ENCODE measurements at regions of chr6 and their contacts with region 1.

Region 1: DNA sequence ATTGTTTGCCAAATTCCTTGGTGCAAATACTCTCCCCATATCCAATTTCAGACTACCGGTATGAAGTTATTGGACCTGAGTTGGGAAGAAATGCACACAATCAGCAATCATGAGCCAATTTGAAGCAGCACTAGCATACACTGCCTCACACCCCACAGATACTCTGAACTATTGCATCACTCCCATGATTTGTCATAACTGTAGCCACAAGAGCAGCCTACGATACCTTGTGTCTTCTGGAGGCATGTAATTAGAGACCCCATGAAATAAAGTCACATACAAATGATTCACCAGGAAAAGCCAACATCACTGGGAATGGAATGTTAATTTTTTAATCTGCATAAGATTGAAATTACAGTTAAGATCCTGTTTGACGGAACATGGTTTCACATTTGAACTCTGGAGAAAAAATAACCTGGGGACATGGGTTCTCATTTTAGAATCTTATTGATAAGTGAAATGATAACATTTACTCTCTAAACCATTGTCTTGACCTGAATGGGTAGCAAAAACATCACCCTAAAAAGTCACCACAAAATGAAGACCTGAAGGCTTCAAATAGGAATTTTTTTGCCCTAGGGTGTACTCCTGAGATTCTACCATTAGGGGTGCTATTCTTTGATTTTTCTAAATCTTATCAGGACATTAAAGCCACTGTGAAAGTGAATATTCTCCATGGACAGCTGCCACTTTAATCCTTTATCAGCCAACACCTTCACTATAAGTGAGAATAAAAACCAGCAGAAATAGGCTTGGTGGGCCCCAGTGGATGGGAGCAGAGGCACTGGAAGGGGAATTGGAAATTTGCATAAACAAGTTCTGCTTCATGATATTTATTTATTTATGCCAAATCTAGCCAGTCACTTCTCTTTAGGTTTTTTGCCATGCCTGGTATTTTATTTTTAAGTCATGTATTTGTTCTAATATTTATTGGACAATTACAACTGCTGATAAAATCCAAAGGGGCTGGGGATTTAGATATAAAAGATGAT is 34.5 kb upstream of the HBS1L start:
- DNase-seq: peak; percentile 63
- ATAC-seq: peak; percentile 91
- H3K4me3 ChIP-seq: peak overlapping the region; percentile 22; the same call in 1 of the 2 replicates
- H3K27ac ChIP-seq: 0 out of 2 replicates have a peak overlapping the region, but pooled peaks have one; percentile 15
- H3K4me1 ChIP-seq: peaks cover 36% of the 10 kb centered on the region
- H3K27me3 ChIP-seq: no peaks in the 10 kb centered on the region; a peak in 1 of 4 replicates
- CTCF ChIP-seq: peak; percentile 26 to 58 (median 43)
- EP300 ChIP-seq: peak; percentile 73 to 93
- POLR2A ChIP-seq: no peak
- RAD21 ChIP-seq: peak; percentile 36

Region 2: DNA sequence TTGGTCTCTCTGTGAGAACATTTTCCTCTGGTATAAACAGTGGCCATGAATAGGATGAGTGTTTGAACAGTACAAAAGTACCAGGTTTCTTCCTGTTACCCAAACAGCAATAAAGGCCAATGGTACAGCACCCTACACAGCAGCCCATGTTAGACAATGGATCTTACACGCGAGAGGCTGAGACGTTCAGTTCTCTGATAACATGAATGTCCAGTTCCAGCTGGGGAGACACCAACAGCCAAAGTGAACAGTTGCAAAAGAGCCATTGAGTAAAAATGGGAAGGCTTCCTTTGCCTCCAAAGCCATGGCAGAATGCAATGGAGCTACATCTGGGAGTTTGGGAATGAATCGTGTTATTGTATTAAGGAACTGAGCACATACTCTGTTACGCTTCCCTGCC is 524.4 kb before region 1 on chr6:
- CTCF ChIA-PET with region 1: no interaction called
- POLR2A ChIA-PET with region 1: no interaction called
- RAD21 ChIA-PET with region 1: no interaction called
- SMC1A ChIA-PET with region 1: no interaction called
- in situ Hi-C with region 1: no loop called
- intact Hi-C with region 1: no loop called
- DNase-seq: no peak
- ATAC-seq: no peak
- H3K4me3 ChIP-seq: no peak overlapping the region
- H3K27ac ChIP-seq: no peak overlapping the region
- H3K4me1 ChIP-seq: no peaks in the 10 kb centered on the region
- H3K27me3 ChIP-seq: no peaks in the 10 kb centered on the region
- CTCF ChIP-seq: no peak
- EP300 ChIP-seq: no peak
- POLR2A ChIP-seq: no peak
- RAD21 ChIP-seq: no peak

Region 3: DNA sequence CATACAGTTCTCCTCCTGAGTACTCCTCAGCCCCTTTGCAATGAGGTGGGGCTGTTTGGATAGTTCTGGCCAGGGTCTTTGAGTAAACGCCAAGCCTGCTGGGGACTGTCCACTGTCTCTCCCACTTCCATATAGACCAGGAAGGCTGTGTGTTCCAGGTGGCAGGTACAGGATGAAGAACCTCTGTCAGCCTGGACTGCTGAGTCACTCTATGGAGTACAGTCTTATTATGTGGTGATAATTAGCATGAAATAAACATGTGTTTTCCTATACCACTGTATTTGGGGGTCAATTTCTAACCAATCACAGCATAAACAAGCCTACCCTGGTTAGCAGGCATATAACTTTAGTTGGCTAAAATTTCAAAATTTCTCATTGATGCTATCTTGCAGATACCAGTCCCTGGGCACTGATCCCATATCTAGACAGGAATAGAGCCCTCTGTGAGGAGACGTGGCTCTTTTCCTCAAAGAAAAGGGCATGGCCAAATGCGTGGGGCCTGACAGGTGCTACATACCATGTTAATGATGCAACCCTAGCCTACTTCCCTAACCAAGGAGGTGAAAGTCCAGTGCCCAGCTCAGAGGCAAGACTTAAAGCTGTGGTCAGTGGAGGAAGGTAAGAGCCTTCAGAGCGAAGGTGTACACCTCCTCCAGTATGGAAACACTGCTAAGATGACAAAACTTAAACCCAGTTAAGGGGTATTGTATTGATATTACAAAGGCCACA is 134.7 kb before region 1 on chr6:
- CTCF ChIA-PET with region 1: no interaction called
- POLR2A ChIA-PET with region 1: no interaction called
- RAD21 ChIA-PET with region 1: no interaction called
- SMC1A ChIA-PET with region 1: no interaction called
- in situ Hi-C with region 1: no loop called
- intact Hi-C with region 1: no loop called
- DNase-seq: no peak
- ATAC-seq: no peak; the same call in 2 of the 3 replicates
- H3K4me3 ChIP-seq: no peak overlapping the region
- H3K27ac ChIP-seq: no peak overlapping the region
- H3K4me1 ChIP-seq: no peaks in the 10 kb centered on the region
- H3K27me3 ChIP-seq: no peaks in the 10 kb centered on the region
- CTCF ChIP-seq: no peak
- EP300 ChIP-seq: no peak
- POLR2A ChIP-seq: no peak
- RAD21 ChIP-seq: no peak

Region 4: DNA sequence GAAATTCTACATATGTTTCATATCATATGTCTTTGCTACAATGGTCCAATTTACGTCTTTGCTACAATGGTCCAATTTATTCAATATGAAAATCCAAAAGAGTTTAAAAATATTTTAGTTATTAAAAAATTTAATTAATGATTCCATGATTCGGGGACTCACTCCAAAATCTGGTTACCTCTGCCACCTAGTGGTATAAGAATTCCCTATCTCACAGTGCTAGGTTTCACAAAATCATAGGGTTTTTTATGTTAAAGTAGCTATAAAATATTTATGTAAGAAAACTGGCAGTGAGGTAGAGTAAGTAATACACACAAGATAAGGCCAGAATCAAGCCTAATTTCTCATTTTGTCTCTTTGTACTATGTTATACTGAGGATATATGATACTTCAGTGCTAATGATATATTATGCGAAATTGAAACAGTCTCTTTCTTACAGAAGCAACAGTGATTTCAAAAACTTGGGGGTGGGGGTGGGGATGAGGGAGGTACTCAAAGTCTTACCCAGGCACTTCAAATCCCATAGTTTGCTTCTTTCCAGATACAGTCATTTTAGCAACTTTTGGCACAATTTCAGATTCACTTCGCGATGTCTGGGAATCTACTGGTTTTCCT is 86.8 kb before region 1 on chr6:
- CTCF ChIA-PET with region 1: interaction called, 28 read pairs
- POLR2A ChIA-PET with region 1: interaction called, 10 read pairs
- RAD21 ChIA-PET with region 1: interaction called, 36 read pairs
- SMC1A ChIA-PET with region 1: interaction called, 41 read pairs
- in situ Hi-C with region 1: no loop called
- intact Hi-C with region 1: loop called (anchors 2 kb)
- DNase-seq: no peak
- ATAC-seq: peak; percentile 64
- H3K4me3 ChIP-seq: no peak overlapping the region; the same call in 1 of the 2 replicates
- H3K27ac ChIP-seq: peak overlapping the region; percentile 88
- H3K4me1 ChIP-seq: peaks cover 11% of the 10 kb centered on the region
- H3K27me3 ChIP-seq: no peaks in the 10 kb centered on the region
- CTCF ChIP-seq: peak; percentile 42 to 45 (median 44); a peak in 4 of 6 replicates
- EP300 ChIP-seq: no peak
- POLR2A ChIP-seq: no peak
- RAD21 ChIP-seq: peak; percentile 65

Region 5: GRCh38 chr6:135030056-135030473 is 59.0 kb before region 1 on chr6:
- CTCF ChIA-PET with region 1: interaction called, 14 read pairs
- POLR2A ChIA-PET with region 1: interaction called, 4 read pairs
- RAD21 ChIA-PET with region 1: interaction called, 20 read pairs
- SMC1A ChIA-PET with region 1: interaction called, 15 read pairs
- in situ Hi-C with region 1: no loop called
- intact Hi-C with region 1: no loop called
- DNase-seq: peak; percentile 86
- ATAC-seq: peak; percentile 97
- H3K4me3 ChIP-seq: 0 out of 2 replicates have a peak overlapping the region, but pooled peaks have one; percentile 19
- H3K27ac ChIP-seq: peak overlapping the region; percentile 76
- H3K4me1 ChIP-seq: peaks cover 22% of the 10 kb centered on the region
- H3K27me3 ChIP-seq: no peaks in the 10 kb centered on the region
- CTCF ChIP-seq: no peak
- EP300 ChIP-seq: peak; percentile 84 to 86; a peak in 3 of 4 replicates
- POLR2A ChIP-seq: no peak
- RAD21 ChIP-seq: 0 out of 2 replicates have a peak, but pooled peaks have one; percentile 11

Region 6: GRCh38 chr6:135054569-135055498 is 34.3 kb before region 1 on chr6 and contains the start of gene HBS1L:
- CTCF ChIA-PET with region 1: interaction called, 36 read pairs
- POLR2A ChIA-PET with region 1: interaction called, 25 read pairs
- RAD21 ChIA-PET with region 1: interaction called, 63 read pairs
- SMC1A ChIA-PET with region 1: interaction called, 56 read pairs
- in situ Hi-C with region 1: no loop called
- intact Hi-C with region 1: loop called (anchors 2 kb)
- DNase-seq: peak; percentile 98
- ATAC-seq: peak; percentile 98
- H3K4me3 ChIP-seq: peak within 1 kb of the TSS; percentile 89
- H3K27ac ChIP-seq: peak within 1 kb of the TSS; percentile 94
- H3K4me1 ChIP-seq: no peaks in the 10 kb centered on the region
- H3K27me3 ChIP-seq: no peaks in the 10 kb centered on the region
- CTCF ChIP-seq: no peak
- EP300 ChIP-seq: no peak; a peak in 1 of 4 replicates
- POLR2A ChIP-seq: peak; percentile 96
- RAD21 ChIP-seq: no peak
- polyA plus RNA-seq, gene HBS1L: 58.7 to 83.6 TPM

Region 7: DNA sequence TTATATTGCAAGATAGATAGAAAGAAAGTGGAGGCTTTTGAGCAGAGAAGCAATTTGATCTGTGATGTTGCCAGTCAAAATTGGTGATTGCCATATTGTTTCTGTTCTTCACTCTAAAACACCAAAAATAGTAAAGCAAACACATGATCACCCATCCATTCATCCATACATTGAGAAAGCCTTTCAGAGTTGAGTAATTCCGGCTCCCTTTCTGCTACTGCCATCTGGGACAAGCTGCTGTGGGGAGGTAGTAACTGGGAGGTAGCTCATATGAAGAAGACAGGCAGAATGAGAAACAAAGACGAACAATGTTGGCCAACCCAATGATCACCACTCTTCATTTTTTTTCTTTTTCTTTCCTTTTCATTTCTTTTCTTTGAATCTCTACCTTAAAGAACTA is 16.6 kb after region 1 on chr6:
- CTCF ChIA-PET with region 1: interaction called, 73 read pairs
- POLR2A ChIA-PET with region 1: interaction called, 28 read pairs
- RAD21 ChIA-PET with region 1: interaction called, 49 read pairs
- SMC1A ChIA-PET with region 1: interaction called, 49 read pairs
- in situ Hi-C with region 1: no loop called
- intact Hi-C with region 1: no loop called
- DNase-seq: no peak
- ATAC-seq: no peak
- H3K4me3 ChIP-seq: no peak overlapping the region
- H3K27ac ChIP-seq: no peak overlapping the region
- H3K4me1 ChIP-seq: peaks cover 3% of the 10 kb centered on the region
- H3K27me3 ChIP-seq: no peaks in the 10 kb centered on the region
- CTCF ChIP-seq: no peak
- EP300 ChIP-seq: no peak
- POLR2A ChIP-seq: no peak
- RAD21 ChIP-seq: no peak

Region 8: GRCh38 chr6:135135835-135136234 is 46.7 kb after region 1 on chr6:
- CTCF ChIA-PET with region 1: interaction called, 4 read pairs
- POLR2A ChIA-PET with region 1: interaction called, 3 read pairs
- RAD21 ChIA-PET with region 1: interaction called, 75 read pairs
- SMC1A ChIA-PET with region 1: interaction called, 31 read pairs
- in situ Hi-C with region 1: no loop called
- intact Hi-C with region 1: no loop called
- DNase-seq: no peak
- ATAC-seq: no peak; the same call in 2 of the 3 replicates
- H3K4me3 ChIP-seq: no peak overlapping the region
- H3K27ac ChIP-seq: no peak overlapping the region
- H3K4me1 ChIP-seq: no peaks in the 10 kb centered on the region; the same call in 1 of the 2 replicates
- H3K27me3 ChIP-seq: no peaks in the 10 kb centered on the region
- CTCF ChIP-seq: no peak
- EP300 ChIP-seq: no peak
- POLR2A ChIP-seq: no peak
- RAD21 ChIP-seq: no peak

Region 9: DNA sequence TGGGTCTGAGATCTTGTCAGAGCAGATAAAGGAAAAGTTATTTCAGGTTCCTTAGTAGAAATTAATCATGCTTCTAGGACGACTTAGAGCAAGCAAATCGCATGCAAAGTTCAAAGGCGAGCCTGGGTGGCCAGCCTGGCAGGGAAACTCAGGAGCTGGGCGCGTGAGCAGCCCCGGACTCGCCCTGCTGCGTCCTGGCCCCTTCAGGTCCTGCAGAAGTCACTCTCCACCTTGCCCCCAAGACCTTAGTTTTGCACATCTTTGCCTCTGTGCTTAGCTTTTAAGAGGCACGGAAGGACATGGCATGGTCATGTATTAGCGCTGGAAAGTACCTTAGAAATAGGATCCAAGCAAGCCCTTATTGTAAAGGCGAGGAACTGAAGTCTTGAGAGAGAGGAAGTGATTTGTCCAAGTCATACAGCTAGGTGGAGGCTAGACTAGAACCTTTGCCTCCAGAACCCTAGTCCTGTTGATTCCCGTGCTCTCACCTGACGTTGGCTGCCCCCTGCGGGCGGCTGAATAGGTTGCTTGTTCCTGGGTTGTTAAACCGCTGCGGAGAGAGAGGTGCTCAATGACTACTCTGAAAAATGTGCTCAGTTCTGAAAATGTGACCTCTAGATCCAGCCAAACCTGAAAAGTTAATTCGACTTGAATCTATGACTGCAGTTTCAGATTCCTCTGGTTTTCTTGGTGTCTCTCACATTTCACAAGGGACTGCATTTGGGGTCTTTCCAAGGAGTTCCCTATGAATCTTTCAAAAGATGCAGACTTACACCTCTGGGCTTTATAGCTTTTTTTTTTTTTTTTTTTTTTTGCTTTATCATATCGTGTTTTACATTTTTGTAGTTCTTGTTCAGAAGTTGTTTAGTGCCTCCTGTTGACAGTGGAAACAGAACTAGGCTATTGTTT is 94.7 kb after region 1 on chr6:
- CTCF ChIA-PET with region 1: interaction called, 27 read pairs
- POLR2A ChIA-PET with region 1: interaction called, 8 read pairs
- RAD21 ChIA-PET with region 1: interaction called, 24 read pairs
- SMC1A ChIA-PET with region 1: interaction called, 9 read pairs
- in situ Hi-C with region 1: no loop called
- intact Hi-C with region 1: loop called (anchors 1 kb)
- DNase-seq: no peak
- ATAC-seq: peak; percentile 62
- H3K4me3 ChIP-seq: peak overlapping the region; percentile 89
- H3K27ac ChIP-seq: peak overlapping the region; percentile 99
- H3K4me1 ChIP-seq: peaks cover 16% of the 10 kb centered on the region
- H3K27me3 ChIP-seq: no peaks in the 10 kb centered on the region
- CTCF ChIP-seq: peak; percentile 71 to 91 (median 79); a peak in 5 of 6 replicates
- EP300 ChIP-seq: no peak; a peak in 1 of 4 replicates
- POLR2A ChIP-seq: peak; percentile 12
- RAD21 ChIP-seq: peak; percentile 90

Measured in GM12878 (cell line).